ENCODE measurements at regions of chr12 and their contacts with region 1.

Region 1: DNA sequence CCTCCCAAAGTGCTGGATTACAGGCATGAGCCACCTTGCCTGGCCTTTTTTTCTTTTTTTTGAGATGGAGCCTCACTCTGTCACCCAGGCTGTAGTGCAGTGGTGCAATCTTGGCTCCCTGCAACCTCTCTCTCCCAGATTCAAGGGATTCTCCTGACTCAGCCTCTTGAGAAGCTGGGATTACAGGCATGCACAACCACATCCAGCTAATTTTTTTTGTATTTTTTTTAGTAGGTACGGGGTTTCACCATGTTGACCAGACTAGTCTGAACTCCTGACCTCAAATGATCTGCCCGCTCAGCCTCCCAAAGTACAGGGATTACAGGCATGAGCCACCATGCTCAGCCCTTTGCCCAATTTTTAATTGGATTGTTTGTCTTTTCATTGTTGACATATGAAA is 58.0 kb downstream of the SINHCAF start:
- DNase-seq: no peak
- H3K4me3 ChIP-seq: no peak overlapping the region
- H3K4me3 Mint-ChIP-seq: no peak overlapping the region
- H3K27ac ChIP-seq: no peak overlapping the region
- H3K27ac Mint-ChIP-seq: no peak overlapping the region
- H3K4me1 ChIP-seq: no peaks in the 10 kb centered on the region
- H3K4me1 Mint-ChIP-seq: no peaks in the 10 kb centered on the region
- H3K27me3 ChIP-seq: no peaks in the 10 kb centered on the region
- H3K27me3 Mint-ChIP-seq: no peaks in the 10 kb centered on the region

Region 2: GRCh38 chr12:30847259-30847658 is 420.7 kb before region 1 on chr12:
- CTCF ChIA-PET with region 1: interaction called, 11 read pairs
- POLR2A ChIA-PET with region 1: no interaction called
- DNase-seq: peak in 2 of 5 donors; percentile 34
- H3K4me3 ChIP-seq: no peak overlapping the region
- H3K4me3 Mint-ChIP-seq: peak overlapping the region in 1 of 7 donors; percentile 6
- H3K27ac ChIP-seq: no peak overlapping the region
- H3K27ac Mint-ChIP-seq: no peak overlapping the region
- H3K4me1 ChIP-seq: no peaks in the 10 kb centered on the region
- H3K4me1 Mint-ChIP-seq: peaks cover 9 to 12% (median 11%) of the 10 kb centered on the region in 3 donors
- H3K27me3 ChIP-seq: no peaks in the 10 kb centered on the region
- H3K27me3 Mint-ChIP-seq: peaks cover 0 to 1% of the 10 kb centered on the region in 2 donors

Region 3: GRCh38 chr12:31250179-31250578 is 17.8 kb before region 1 on chr12:
- CTCF ChIA-PET with region 1: interaction called, 14 read pairs
- POLR2A ChIA-PET with region 1: no interaction called
- DNase-seq: no peak
- H3K4me3 ChIP-seq: no peak overlapping the region
- H3K4me3 Mint-ChIP-seq: no peak overlapping the region
- H3K27ac ChIP-seq: no peak overlapping the region
- H3K27ac Mint-ChIP-seq: no peak overlapping the region
- H3K4me1 ChIP-seq: no peaks in the 10 kb centered on the region
- H3K4me1 Mint-ChIP-seq: peaks cover 0 to 2% (median 0%) of the 10 kb centered on the region in 3 donors
- H3K27me3 ChIP-seq: no peaks in the 10 kb centered on the region
- H3K27me3 Mint-ChIP-seq: peaks cover 1 to 7% of the 10 kb centered on the region in 2 donors

Region 4: DNA sequence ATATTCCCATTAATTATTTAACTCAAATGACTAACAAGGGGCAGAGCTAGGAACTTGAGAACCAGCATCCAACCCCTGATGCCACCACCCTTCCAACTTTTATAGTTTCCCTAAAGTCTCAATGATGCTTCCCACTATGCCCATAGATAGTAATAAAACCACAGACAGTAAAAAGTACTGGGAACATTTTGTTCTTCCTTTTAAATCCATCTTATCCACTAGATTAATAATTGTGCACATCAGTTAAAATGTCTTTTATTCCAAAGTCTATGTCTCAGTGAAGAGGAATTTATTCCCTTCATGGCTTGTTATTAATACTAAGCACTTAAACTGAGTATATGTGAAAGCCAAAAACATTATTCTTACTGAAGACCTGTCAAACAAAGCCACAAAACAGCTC is 12.2 kb after region 1 on chr12:
- CTCF ChIA-PET with region 1: interaction called, 11 read pairs
- POLR2A ChIA-PET with region 1: no interaction called
- DNase-seq: no peak
- H3K4me3 ChIP-seq: no peak overlapping the region
- H3K4me3 Mint-ChIP-seq: no peak overlapping the region
- H3K27ac ChIP-seq: no peak overlapping the region
- H3K27ac Mint-ChIP-seq: peak overlapping the region in 4 of 8 donors; percentile 34 to 68 (median 46)
- H3K4me1 ChIP-seq: no peaks in the 10 kb centered on the region
- H3K4me1 Mint-ChIP-seq: no peaks in the 10 kb centered on the region
- H3K27me3 ChIP-seq: no peaks in the 10 kb centered on the region
- H3K27me3 Mint-ChIP-seq: no peaks in the 10 kb centered on the region

Measured in CD8-positive, alpha-beta memory T cell (primary cell).